ENCODE measurements at regions of chr4 and their contacts with region 1.

Region 1: DNA sequence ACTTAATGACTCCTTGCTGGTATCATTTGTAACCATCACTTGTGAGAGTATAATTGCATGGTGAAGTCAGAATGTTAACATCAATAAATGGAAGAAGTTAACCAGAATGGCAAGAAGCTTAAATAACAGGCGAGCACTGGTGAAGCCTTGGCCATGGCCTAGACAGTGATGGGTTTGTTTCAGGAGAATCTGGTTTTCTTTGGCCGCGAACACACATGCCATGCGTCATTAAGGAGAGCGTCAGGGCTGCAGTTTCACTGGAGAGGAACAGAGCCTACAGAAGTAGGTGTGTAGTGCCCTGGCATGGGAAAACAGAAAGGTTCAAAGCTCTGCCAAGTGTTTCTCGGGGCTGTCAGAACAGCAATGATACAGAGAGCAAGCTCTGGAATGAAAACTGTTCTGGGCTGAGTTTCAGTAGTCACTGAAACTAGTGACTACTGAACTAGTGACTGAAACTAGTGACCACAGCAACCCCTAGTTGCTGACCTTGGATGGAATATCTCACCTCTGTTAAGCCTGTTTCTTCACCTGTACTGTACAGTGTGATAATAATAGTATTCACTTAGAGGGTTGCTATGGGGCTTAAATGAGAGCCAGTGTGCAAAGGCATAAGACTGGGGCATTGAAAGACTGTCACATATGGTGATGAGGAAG is 93.8 kb downstream of the C4orf51 start:
- DNase-seq: peak; percentile 90
- H3K4me3 ChIP-seq: no peak overlapping the region
- H3K27ac ChIP-seq: peak overlapping the region; percentile 53 to 83 (median 72)
- H3K4me1 ChIP-seq: peaks cover 0 to 20% (median 14%) of the 10 kb centered on the region in 4 donors
- H3K27me3 ChIP-seq: no peaks in the 10 kb centered on the region
- CTCF ChIP-seq: no peak
- EP300 ChIP-seq: peak in 3 of 4 donors; percentile 45 to 85 (median 59)
- POLR2A ChIP-seq: no peak

Region 2: DNA sequence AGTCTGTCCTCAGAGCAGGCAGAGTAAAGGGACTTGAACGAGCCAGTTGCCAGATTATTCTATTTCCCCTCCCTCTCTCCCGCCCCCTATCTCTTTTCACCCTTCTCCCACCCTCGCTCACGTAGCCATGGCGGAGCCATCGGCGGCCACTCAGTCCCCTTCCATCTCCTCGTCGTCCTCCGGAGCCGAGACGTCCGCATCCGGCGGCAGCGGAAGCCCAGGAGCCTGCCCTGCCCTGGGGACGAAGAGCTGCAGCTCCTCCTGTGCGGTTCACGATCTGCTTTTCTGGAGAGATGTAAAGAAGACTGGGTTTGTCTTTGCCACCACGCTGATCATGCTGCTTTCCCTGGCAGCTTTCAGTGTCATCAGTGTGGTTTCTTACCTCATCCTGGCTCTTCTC is 398.3 kb before region 1 on chr4:
- intact Hi-C with region 1: no loop called
- DNase-seq: no peak
- H3K4me3 ChIP-seq: no peak overlapping the region
- H3K27ac ChIP-seq: no peak overlapping the region
- H3K4me1 ChIP-seq: no peaks in the 10 kb centered on the region
- H3K27me3 ChIP-seq: no peaks in the 10 kb centered on the region
- CTCF ChIP-seq: no peak
- EP300 ChIP-seq: no peak
- POLR2A ChIP-seq: no peak

Region 3: GRCh38 chr4:145452447-145453162 is 321.1 kb before region 1 on chr4:
- intact Hi-C with region 1: no loop called
- DNase-seq: no peak
- H3K4me3 ChIP-seq: no peak overlapping the region
- H3K27ac ChIP-seq: no peak overlapping the region
- H3K4me1 ChIP-seq: no peaks in the 10 kb centered on the region
- H3K27me3 ChIP-seq: no peaks in the 10 kb centered on the region
- CTCF ChIP-seq: no peak
- EP300 ChIP-seq: no peak
- POLR2A ChIP-seq: no peak

Region 4: GRCh38 chr4:145679991-145680455 is 93.7 kb before region 1 on chr4 and contains the start of gene C4orf51:
- intact Hi-C with region 1: loop called (anchors 10 kb)
- DNase-seq: no peak
- H3K4me3 ChIP-seq: no peak within 1 kb of the TSS
- H3K27ac ChIP-seq: peak within 1 kb of the TSS in 3 of 4 donors; percentile 41 to 67 (median 44)
- H3K4me1 ChIP-seq: peaks cover 0 to 27% (median 19%) of the 10 kb centered on the region in 4 donors
- H3K27me3 ChIP-seq: no peaks in the 10 kb centered on the region
- CTCF ChIP-seq: no peak
- EP300 ChIP-seq: no peak
- POLR2A ChIP-seq: no peak
- total RNA-seq, gene C4orf51: not detected

Region 5: DNA sequence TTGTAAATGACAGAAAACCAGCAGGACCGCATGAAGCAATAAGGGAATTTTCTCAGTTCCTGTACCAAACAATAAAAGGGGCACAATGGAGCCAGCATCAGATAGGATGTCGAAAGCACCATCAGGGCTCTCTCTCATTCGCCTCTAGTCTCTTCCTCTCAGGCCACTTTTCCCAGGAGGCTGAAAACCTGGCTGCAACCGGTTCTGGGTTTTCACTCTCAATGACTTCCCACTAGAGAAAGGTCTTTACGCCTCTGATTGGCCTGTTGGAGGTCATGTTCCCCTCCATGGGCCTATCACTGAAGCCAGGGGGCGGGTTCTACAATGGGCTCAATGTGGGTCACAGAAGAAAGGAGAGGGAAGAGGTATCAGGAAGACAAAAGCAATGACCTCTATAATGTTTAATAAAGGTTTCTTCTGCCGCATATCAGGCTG is 135.6 kb after region 1 on chr4:
- intact Hi-C with region 1: no loop called
- DNase-seq: peak; percentile 92
- H3K4me3 ChIP-seq: peak overlapping the region; percentile 23 to 48 (median 41)
- H3K27ac ChIP-seq: peak overlapping the region; percentile 74 to 81 (median 78)
- H3K4me1 ChIP-seq: peaks cover 0 to 40% (median 28%) of the 10 kb centered on the region in 4 donors
- H3K27me3 ChIP-seq: no peaks in the 10 kb centered on the region
- CTCF ChIP-seq: no peak
- EP300 ChIP-seq: no peak
- POLR2A ChIP-seq: no peak

Measured in sigmoid colon (tissue), 7 donors.